ENCODE measurements at regions of chr7 and their contacts with region 1.

Region 1: DNA sequence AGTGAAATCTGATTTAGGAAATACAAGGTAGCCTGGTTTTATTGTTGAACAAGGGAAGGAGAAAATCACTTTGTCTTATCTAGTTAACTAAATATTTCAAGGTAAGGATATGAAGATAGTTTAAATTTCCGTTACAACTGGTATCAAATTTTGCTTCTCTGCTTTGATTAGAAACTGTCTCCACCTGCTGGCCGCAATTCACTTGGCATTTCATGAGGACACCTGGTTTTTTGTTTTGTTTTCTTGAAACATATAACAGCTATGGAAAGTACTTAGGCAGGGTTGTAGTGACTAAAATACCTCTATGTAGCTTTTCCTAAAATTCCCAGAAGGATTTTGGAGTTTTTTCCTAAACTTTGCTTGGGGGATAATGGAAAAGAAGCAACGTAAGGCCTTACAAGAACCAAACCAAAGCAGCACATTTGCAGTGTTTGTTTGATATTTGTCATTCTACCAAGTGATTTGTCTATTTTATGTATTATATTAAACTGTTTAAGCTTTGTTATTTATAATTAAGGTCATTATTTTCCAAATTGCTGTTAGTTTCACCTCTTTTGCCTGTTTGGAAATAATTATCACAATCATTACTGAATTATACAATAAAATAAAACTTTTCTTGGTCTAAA is 73.6 kb downstream of the AHCYL2 start:
- DNase-seq: peak; percentile 64
- H3K4me3 Mint-ChIP-seq: no peak overlapping the region
- H3K27ac Mint-ChIP-seq: no peak overlapping the region
- H3K4me1 Mint-ChIP-seq: peaks cover 6% of the 10 kb centered on the region
- H3K27me3 Mint-ChIP-seq: no peaks in the 10 kb centered on the region
- CTCF ChIP-seq: peak; percentile 67

Region 2: GRCh38 chr7:129224251-129225205 is 73.9 kb before region 1 on chr7 and contains the start of gene AHCYL2:
- CTCF ChIA-PET with region 1: interaction called, 176 read pairs
- POLR2A ChIA-PET with region 1: interaction called, 12 read pairs
- intact Hi-C with region 1: no loop called
- DNase-seq: peak; percentile 97
- H3K4me3 Mint-ChIP-seq: peak within 1 kb of the TSS; percentile 94
- H3K27ac Mint-ChIP-seq: peak within 1 kb of the TSS; percentile 100
- H3K4me1 Mint-ChIP-seq: peaks cover 11% of the 10 kb centered on the region
- H3K27me3 Mint-ChIP-seq: no peaks in the 10 kb centered on the region
- CTCF ChIP-seq: no peak
- total RNA-seq, gene AHCYL2: 12.8 and 16.4 TPM in 2 replicates

Region 3: DNA sequence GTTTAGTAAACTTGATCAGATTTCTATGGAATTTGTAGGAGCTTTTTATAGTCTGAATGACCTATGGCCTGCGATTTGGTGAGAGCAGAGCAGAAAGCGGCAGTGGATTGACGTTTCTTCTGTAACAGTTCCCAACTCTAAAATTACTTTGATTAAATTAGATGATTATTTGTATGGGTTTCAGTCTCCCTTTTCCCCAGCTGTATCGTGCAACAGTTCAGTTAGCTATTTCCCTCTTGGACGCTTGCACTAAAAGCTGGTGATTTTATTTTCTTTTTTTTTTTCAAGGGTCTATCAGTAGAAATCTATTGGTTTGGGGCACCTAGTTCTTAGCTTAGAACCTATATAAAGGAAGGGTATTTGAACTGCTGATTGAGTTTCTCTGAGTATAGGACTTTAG is 66.7 kb before region 1 on chr7:
- CTCF ChIA-PET with region 1: interaction called, 25 read pairs
- POLR2A ChIA-PET with region 1: interaction called, 7 read pairs
- intact Hi-C with region 1: no loop called
- DNase-seq: no peak
- H3K4me3 Mint-ChIP-seq: no peak overlapping the region
- H3K27ac Mint-ChIP-seq: no peak overlapping the region
- H3K4me1 Mint-ChIP-seq: peaks cover under 1% of the 10 kb centered on the region
- H3K27me3 Mint-ChIP-seq: no peaks in the 10 kb centered on the region
- CTCF ChIP-seq: no peak

Region 4: DNA sequence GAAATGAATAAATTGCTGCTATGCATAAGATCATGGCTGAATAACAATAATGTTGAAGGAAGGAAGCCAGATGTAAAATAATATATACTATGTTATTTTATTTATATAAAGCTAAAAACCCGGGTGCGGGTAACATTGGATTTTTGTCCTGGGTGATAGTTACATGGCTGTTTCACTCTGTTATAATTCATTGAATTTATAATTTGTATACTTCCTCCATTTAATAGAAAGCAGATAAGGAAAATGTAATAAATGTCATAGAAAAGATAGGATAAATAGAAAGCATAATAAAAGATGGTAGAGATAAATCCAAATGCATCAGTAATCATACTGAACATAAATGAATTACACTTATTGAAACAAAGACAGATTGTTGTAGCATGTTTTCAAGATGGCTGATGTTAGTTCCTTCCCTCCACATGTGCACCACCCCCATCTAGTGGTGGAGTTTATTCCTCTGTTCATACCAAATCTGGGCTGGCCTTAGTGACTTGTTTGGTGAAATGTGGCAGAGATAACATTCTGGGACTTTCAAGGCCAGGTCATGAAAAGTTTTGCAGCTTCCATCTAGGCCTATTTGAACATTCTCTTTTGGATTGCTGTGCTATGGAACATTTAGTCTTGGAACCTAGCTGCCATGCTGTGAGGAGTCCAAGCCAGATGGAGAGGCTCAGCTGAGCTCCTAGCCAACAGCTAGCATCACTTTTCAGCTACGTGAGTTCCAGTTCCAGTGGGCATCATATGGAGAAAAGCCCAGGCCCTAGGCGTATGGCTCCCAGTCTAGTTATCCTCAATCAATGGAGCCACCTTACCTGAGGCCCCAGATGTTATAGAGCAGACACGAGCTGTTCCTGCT is 26.7 kb before region 1 on chr7:
- CTCF ChIA-PET with region 1: interaction called, 22 read pairs
- POLR2A ChIA-PET with region 1: interaction called, 3 read pairs
- intact Hi-C with region 1: no loop called
- DNase-seq: peak; percentile 66
- H3K4me3 Mint-ChIP-seq: no peak overlapping the region
- H3K27ac Mint-ChIP-seq: no peak overlapping the region
- H3K4me1 Mint-ChIP-seq: peaks cover 5% of the 10 kb centered on the region
- H3K27me3 Mint-ChIP-seq: no peaks in the 10 kb centered on the region
- CTCF ChIP-seq: peak; percentile 52

Region 5: DNA sequence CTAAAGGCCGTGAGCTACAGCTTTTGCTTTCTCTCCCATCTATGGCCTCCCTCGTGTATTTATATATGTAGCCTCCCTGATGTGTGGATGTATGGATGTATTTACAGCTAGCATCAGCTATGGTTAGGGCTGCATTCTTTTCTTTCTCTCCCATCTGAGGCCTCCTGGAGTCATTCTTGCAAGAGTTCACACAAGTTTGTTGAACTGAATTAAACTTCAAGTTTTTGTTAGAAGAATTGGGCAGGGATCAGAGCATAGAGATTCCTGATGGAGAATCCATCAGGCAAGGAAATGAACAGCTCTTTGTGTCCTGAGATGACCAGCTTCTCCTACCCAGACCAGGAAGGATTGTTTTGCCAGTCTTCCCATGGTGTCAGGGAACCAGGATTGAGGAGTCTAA is 13.3 kb before region 1 on chr7:
- CTCF ChIA-PET with region 1: interaction called, 16 read pairs
- POLR2A ChIA-PET with region 1: interaction called, 3 read pairs
- intact Hi-C with region 1: no loop called
- DNase-seq: no peak
- H3K4me3 Mint-ChIP-seq: no peak overlapping the region
- H3K27ac Mint-ChIP-seq: no peak overlapping the region
- H3K4me1 Mint-ChIP-seq: peaks cover 6% of the 10 kb centered on the region
- H3K27me3 Mint-ChIP-seq: no peaks in the 10 kb centered on the region
- CTCF ChIP-seq: no peak

Region 6: DNA sequence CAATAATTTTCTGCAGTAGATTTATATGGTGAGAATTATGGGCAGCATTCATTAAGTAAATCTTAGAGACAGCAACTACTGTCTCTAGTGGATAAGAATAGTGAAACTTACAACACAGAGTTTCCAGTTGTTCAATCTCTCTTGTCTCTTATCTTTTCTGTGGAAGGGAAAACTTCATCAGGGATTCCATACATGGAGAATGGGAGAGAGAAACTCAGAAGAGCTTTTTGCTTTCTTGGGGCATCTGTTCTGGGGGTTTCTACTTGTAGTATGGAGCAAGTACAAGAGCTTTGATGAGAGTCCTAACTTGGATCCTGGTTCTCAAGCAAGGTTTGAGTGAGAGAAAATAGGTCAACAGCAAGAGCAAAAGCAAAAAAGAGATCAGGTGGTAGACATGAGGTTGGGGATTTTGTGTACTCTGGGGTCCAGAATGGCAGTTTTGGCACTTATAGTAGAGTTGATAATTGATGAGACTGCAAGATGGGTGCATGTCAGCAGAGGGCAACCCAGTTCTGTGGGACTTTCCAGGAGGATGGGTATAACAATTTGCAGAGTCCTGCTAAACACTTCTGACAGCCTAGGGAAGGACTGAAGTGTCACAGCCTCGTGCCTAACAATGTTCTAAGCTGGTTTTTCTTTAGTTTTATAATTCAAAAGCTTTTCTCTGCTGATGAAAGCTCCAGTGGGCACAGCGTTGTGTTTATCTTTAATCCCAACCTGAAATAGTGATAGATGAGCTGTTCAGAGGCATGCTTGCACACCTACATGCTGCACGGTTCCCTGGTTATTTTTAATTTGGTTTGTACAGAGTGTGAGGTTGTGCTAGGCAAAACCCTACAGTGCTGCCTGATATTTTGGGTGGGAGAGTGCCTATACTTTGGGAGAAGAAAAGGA is 103.8 kb after region 1 on chr7:
- CTCF ChIA-PET with region 1: no interaction called
- POLR2A ChIA-PET with region 1: no interaction called
- intact Hi-C with region 1: no loop called
- DNase-seq: peak; percentile 30
- H3K4me3 Mint-ChIP-seq: no peak overlapping the region
- H3K27ac Mint-ChIP-seq: no peak overlapping the region
- H3K4me1 Mint-ChIP-seq: peaks cover 9% of the 10 kb centered on the region
- H3K27me3 Mint-ChIP-seq: no peaks in the 10 kb centered on the region
- CTCF ChIP-seq: peak; percentile 26